ENCODE measurements at regions of chr4 and their contacts with region 1.

Region 1: DNA sequence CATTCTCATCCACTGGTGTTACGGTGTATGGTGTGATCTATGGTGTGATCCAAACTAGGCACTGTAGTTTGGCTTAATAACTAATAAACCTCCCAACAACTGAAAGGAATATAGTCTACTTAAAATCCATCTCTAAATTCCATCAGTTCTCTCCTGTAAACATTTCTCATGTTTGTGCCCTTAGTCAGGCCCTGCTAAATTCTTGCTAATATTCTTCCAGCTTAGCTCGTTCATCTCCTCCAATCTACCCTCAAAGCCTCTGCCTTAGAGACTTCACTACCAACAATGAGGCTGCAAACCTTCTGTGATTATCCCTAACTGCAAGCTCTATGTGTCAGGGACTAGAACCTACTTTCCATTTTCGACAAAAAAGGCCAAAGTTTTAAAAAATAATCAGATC is 28.1 kb downstream of the ZAR1 start:
- DNase-seq: no peak
- H3K4me3 ChIP-seq: no peak overlapping the region
- H3K27ac ChIP-seq: no peak overlapping the region
- H3K4me1 ChIP-seq: no peaks in the 10 kb centered on the region
- H3K27me3 ChIP-seq: no peaks in the 10 kb centered on the region
- CTCF ChIP-seq: no peak
- EP300 ChIP-seq: no peak
- POLR2A ChIP-seq: no peak

Region 2: GRCh38 chr4:48557478-48557877 is 39.3 kb after region 1 on chr4:
- intact Hi-C with region 1: loop called (anchors 5 kb)
- DNase-seq: no peak
- H3K4me3 ChIP-seq: no peak overlapping the region
- H3K27ac ChIP-seq: no peak overlapping the region
- H3K4me1 ChIP-seq: no peaks in the 10 kb centered on the region
- H3K27me3 ChIP-seq: no peaks in the 10 kb centered on the region
- CTCF ChIP-seq: no peak
- EP300 ChIP-seq: no peak
- POLR2A ChIP-seq: no peak